ENCODE measurements at regions of chr3 and their contacts with region 1.

Region 1: GRCh38 chr3:56303487-56303886 is 164.8 kb downstream of the ERC2 start:
- DNase-seq: no peak
- H3K4me3 ChIP-seq: no peak overlapping the region
- H3K27ac ChIP-seq: no peak overlapping the region
- H3K4me1 ChIP-seq: no peaks in the 10 kb centered on the region
- H3K27me3 ChIP-seq: no peaks in the 10 kb centered on the region
- CTCF ChIP-seq: no peak
- POLR2A ChIP-seq: no peak

Region 2: DNA sequence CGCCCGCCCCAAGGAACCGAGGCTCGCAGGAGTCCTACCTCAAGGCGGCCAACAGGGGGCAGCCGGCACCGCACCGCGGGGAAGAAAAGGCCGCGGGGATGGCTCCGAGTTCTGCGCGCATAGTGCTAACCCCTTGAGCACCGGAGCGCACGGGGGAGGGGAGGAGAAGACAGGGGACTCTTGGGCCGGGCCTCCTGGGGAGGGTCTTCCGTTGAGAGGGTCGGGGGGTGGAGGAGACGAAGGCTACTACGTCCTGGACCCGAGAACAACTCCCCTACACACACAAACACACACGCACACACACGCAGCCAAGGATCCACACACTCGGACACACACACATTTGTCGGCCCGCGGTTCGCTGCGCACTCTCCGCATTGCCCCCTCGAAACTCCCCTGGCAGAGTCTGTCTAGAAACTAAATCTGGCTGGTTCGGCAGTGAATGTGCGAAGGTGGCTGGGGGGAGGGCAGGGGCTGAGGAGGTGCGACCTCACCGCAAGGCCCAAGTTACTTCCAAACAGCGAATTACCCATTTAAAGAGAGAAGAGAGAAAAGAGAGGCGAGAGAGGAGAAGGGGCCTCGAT is 818.2 kb before region 1 on chr3:
- intact Hi-C with region 1: no loop called
- DNase-seq: peak; percentile 54 to 86
- H3K4me3 ChIP-seq: peak overlapping the region; percentile 51 to 91 (median 81)
- H3K27ac ChIP-seq: peak overlapping the region; percentile 82 to 83
- H3K4me1 ChIP-seq: no peaks in the 10 kb centered on the region
- H3K27me3 ChIP-seq: no peaks in the 10 kb centered on the region
- CTCF ChIP-seq: peak in 2 of 3 donors; percentile 42 to 52
- POLR2A ChIP-seq: no peak

Region 3: GRCh38 chr3:56894881-56895431 is 591.5 kb after region 1 on chr3:
- intact Hi-C with region 1: loop called (anchors 5 kb)
- DNase-seq: no peak
- H3K4me3 ChIP-seq: no peak overlapping the region
- H3K27ac ChIP-seq: no peak overlapping the region
- H3K4me1 ChIP-seq: no peaks in the 10 kb centered on the region
- H3K27me3 ChIP-seq: no peaks in the 10 kb centered on the region
- CTCF ChIP-seq: no peak
- POLR2A ChIP-seq: no peak

Measured in breast epithelium (tissue), 4 donors.